ENCODE measurements at regions of chr2 and their contacts with region 1.

Region 1: GRCh38 chr2:134897932-134898331 is 20.7 kb upstream of the CCNT2 start:
- DNase-seq: peak in 4 of 5 donors; percentile 8 to 16 (median 12)
- H3K4me3 ChIP-seq: no peak overlapping the region
- H3K4me3 Mint-ChIP-seq: no peak overlapping the region
- H3K27ac ChIP-seq: no peak overlapping the region
- H3K27ac Mint-ChIP-seq: no peak overlapping the region
- H3K4me1 ChIP-seq: no peaks in the 10 kb centered on the region
- H3K4me1 Mint-ChIP-seq: no peaks in the 10 kb centered on the region
- H3K27me3 ChIP-seq: no peaks in the 10 kb centered on the region
- H3K27me3 Mint-ChIP-seq: peaks cover 0 to 2% of the 10 kb centered on the region in 2 donors

Region 2: GRCh38 chr2:134454931-134455330 is 443.0 kb before region 1 on chr2:
- CTCF ChIA-PET with region 1: interaction called, 6 read pairs
- POLR2A ChIA-PET with region 1: no interaction called
- intact Hi-C with region 1: loop called (anchors 1 kb)
- DNase-seq: no peak
- H3K4me3 ChIP-seq: no peak overlapping the region
- H3K4me3 Mint-ChIP-seq: peak overlapping the region in 1 of 8 donors; percentile 17
- H3K27ac ChIP-seq: no peak overlapping the region
- H3K27ac Mint-ChIP-seq: peak overlapping the region in 1 of 7 donors; percentile 46
- H3K4me1 ChIP-seq: no peaks in the 10 kb centered on the region
- H3K4me1 Mint-ChIP-seq: peaks cover 0 to 15% (median 0%) of the 10 kb centered on the region in 4 donors
- H3K27me3 ChIP-seq: no peaks in the 10 kb centered on the region
- H3K27me3 Mint-ChIP-seq: no peaks in the 10 kb centered on the region

Region 3: DNA sequence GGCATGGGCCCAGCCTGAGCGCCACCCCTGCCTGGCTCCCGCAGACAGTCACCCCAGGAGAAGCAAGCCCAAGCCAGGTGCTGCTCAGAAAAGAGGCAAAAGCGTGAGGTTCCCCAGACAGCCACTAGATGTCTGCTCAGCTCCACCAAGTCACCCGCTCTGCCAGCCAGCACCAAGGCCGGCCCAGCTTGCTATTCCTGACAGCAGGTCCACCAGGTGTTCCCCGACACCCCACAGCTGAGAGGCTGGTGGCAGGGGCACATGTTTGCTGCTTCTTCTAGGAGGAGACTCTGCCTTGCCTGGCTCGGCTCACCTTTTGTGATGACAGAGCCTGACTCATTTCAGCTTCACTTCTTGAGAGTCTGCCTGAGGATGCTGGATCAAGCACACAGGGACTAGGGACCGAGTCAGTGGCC is 437.3 kb before region 1 on chr2:
- CTCF ChIA-PET with region 1: interaction called, 3 read pairs
- POLR2A ChIA-PET with region 1: no interaction called
- intact Hi-C with region 1: loop called (anchors 1 kb)
- DNase-seq: peak in 4 of 5 donors; percentile 30 to 36 (median 34)
- H3K4me3 ChIP-seq: no peak overlapping the region
- H3K4me3 Mint-ChIP-seq: no peak overlapping the region
- H3K27ac ChIP-seq: no peak overlapping the region
- H3K27ac Mint-ChIP-seq: no peak overlapping the region
- H3K4me1 ChIP-seq: no peaks in the 10 kb centered on the region
- H3K4me1 Mint-ChIP-seq: no peaks in the 10 kb centered on the region
- H3K27me3 ChIP-seq: no peaks in the 10 kb centered on the region
- H3K27me3 Mint-ChIP-seq: no peaks in the 10 kb centered on the region

Region 4: DNA sequence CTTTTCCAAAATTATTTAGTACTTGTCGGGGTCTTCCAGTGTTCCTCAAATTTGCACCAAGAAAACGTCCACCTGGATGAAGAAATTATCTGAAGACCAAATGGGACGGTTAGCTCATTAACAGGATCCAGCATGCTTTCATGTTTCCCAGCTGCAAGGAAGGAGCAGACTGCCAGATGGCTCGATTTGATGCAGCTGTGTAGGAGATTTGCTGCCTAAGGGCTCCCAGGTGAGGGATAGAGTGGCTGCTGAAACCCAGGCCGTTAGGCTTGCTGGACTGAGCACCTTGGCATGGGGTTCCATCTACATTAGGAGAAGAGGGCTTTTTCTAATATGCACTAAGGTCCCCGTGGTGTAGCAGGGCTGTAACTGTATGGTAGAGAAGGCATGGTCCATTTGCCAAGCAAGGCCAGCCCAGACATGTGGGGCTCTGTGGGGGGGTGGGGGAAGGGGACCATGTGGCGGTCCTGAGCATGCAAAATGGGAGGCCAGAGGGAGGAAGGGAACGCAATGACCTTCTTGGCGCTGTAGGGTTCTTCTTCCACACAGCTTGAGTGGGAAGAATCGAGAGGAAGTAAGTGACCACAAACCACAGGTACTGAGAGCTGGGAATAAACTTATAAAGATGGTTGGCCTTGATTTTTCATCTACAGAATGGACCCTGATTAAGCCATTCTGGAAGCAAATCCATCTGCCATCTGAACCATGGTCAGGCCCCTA is 323.2 kb before region 1 on chr2:
- CTCF ChIA-PET with region 1: interaction called, 3 read pairs
- POLR2A ChIA-PET with region 1: no interaction called
- intact Hi-C with region 1: loop called (anchors 2 kb)
- DNase-seq: no peak
- H3K4me3 ChIP-seq: no peak overlapping the region
- H3K4me3 Mint-ChIP-seq: no peak overlapping the region
- H3K27ac ChIP-seq: no peak overlapping the region
- H3K27ac Mint-ChIP-seq: no peak overlapping the region
- H3K4me1 ChIP-seq: no peaks in the 10 kb centered on the region
- H3K4me1 Mint-ChIP-seq: no peaks in the 10 kb centered on the region
- H3K27me3 ChIP-seq: no peaks in the 10 kb centered on the region
- H3K27me3 Mint-ChIP-seq: peaks cover 0 to 3% of the 10 kb centered on the region in 2 donors

Region 5: GRCh38 chr2:134657637-134658250 is 240.2 kb before region 1 on chr2:
- CTCF ChIA-PET with region 1: interaction called, 3 read pairs
- POLR2A ChIA-PET with region 1: no interaction called
- intact Hi-C with region 1: loop called (anchors 2 kb)
- DNase-seq: peak in 4 of 5 donors; percentile 30 to 46 (median 44)
- H3K4me3 ChIP-seq: no peak overlapping the region
- H3K4me3 Mint-ChIP-seq: no peak overlapping the region
- H3K27ac ChIP-seq: no peak overlapping the region
- H3K27ac Mint-ChIP-seq: peak overlapping the region in 1 of 7 donors; percentile 37
- H3K4me1 ChIP-seq: no peaks in the 10 kb centered on the region
- H3K4me1 Mint-ChIP-seq: peaks cover 16 to 34% (median 19%) of the 10 kb centered on the region in 4 donors
- H3K27me3 ChIP-seq: no peaks in the 10 kb centered on the region
- H3K27me3 Mint-ChIP-seq: peaks cover 2 to 3% of the 10 kb centered on the region in 2 donors

Region 6: GRCh38 chr2:135121016-135121657 is 223.2 kb after region 1 on chr2:
- CTCF ChIA-PET with region 1: no interaction called
- POLR2A ChIA-PET with region 1: no interaction called
- intact Hi-C with region 1: no loop called
- DNase-seq: no peak
- H3K4me3 ChIP-seq: no peak overlapping the region
- H3K4me3 Mint-ChIP-seq: no peak overlapping the region
- H3K27ac ChIP-seq: no peak overlapping the region
- H3K27ac Mint-ChIP-seq: no peak overlapping the region
- H3K4me1 ChIP-seq: no peaks in the 10 kb centered on the region
- H3K4me1 Mint-ChIP-seq: peaks cover 0 to 7% (median 1%) of the 10 kb centered on the region in 4 donors
- H3K27me3 ChIP-seq: no peaks in the 10 kb centered on the region
- H3K27me3 Mint-ChIP-seq: no peaks in the 10 kb centered on the region

Measured in CD4-positive, alpha-beta memory T cell (primary cell).